CD14-positive monocyte (primary cell): ENCODE measurements at regions of chr5 and their contacts with region 1.

Region 1: GRCh38 chr5:177303121-177303924 is at the starts of genes PRELID1 and RAB24:
- DNase-seq: peak; percentile 84 to 92 (median 92)
- H3K4me3 ChIP-seq: peak within 1 kb of the TSS; percentile 91 to 97 (median 96)
- H3K4me3 Mint-ChIP-seq: peak within 1 kb of the TSS; percentile 93 to 96
- H3K27ac ChIP-seq: peak within 1 kb of the TSS; percentile 79 to 95
- H3K27ac Mint-ChIP-seq: peak within 1 kb of the TSS; percentile 91 to 99 (median 96)
- H3K4me1 ChIP-seq: peaks cover 83 to 94% of the 10 kb centered on the region in 2 donors
- H3K4me1 Mint-ChIP-seq: peaks cover 81% of the 10 kb centered on the region
- H3K27me3 ChIP-seq: no peaks in the 10 kb centered on the region
- H3K27me3 Mint-ChIP-seq: peaks cover 0 to 2% (median 0%) of the 10 kb centered on the region in 3 donors
- CTCF ChIP-seq: peak; percentile 47
- polyA plus RNA-seq, gene PRELID1: 264 to 510 (median 490) TPM
- polyA plus RNA-seq, gene RAB24: 74.3 to 465 (median 94.4) TPM

Region 2: GRCh38 chr5:177133853-177134696 is 169.2 kb before region 1 on chr5:
- intact Hi-C with region 1: loop called in 1 of 2 experiments (anchors 5 kb)
- DNase-seq: peak; percentile 40 to 62 (median 52)
- H3K4me3 ChIP-seq: peak overlapping the region; percentile 57 to 84 (median 66)
- H3K4me3 Mint-ChIP-seq: peak overlapping the region; percentile 82 to 92
- H3K27ac ChIP-seq: peak overlapping the region; percentile 63 to 86
- H3K27ac Mint-ChIP-seq: peak overlapping the region; percentile 75 to 91 (median 89)
- H3K4me1 ChIP-seq: peaks cover 34 to 54% of the 10 kb centered on the region in 2 donors
- H3K4me1 Mint-ChIP-seq: peaks cover 35% of the 10 kb centered on the region
- H3K27me3 ChIP-seq: no peaks in the 10 kb centered on the region
- H3K27me3 Mint-ChIP-seq: no peaks in the 10 kb centered on the region
- CTCF ChIP-seq: no peak

Region 3: DNA sequence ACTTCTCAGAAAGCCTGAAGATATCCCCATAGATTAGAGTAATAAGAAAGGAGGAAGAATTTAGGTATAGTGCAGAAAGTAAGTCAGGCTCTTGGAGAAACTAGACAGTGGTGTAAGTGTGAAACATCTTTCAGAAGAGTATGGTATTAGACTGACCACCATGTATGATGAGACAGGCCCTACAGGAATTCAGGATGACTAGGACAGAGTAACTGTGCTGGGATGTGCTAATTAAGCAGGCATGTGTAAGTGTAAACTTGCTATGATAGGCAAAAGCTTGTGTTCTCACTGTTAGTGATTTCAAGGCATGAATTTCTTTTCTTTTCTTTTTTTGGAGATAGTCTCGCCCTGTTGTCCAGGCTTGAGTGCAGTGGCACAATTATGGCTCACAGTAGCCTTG is 70.6 kb before region 1 on chr5:
- intact Hi-C with region 1: no loop called
- DNase-seq: no peak
- H3K4me3 ChIP-seq: no peak overlapping the region
- H3K4me3 Mint-ChIP-seq: no peak overlapping the region
- H3K27ac ChIP-seq: no peak overlapping the region
- H3K27ac Mint-ChIP-seq: no peak overlapping the region
- H3K4me1 ChIP-seq: no peaks in the 10 kb centered on the region
- H3K4me1 Mint-ChIP-seq: peaks cover 3% of the 10 kb centered on the region
- H3K27me3 ChIP-seq: no peaks in the 10 kb centered on the region
- H3K27me3 Mint-ChIP-seq: no peaks in the 10 kb centered on the region
- CTCF ChIP-seq: no peak

Region 4: GRCh38 chr5:177592010-177592834 is 288.9 kb after region 1 on chr5 and contains the start of gene TMED9:
- intact Hi-C with region 1: loop called in 1 of 2 experiments (anchors 10 kb)
- DNase-seq: peak; percentile 52 to 72 (median 72)
- H3K4me3 ChIP-seq: peak within 1 kb of the TSS; percentile 80 to 90 (median 87)
- H3K4me3 Mint-ChIP-seq: peak within 1 kb of the TSS; percentile 100
- H3K27ac ChIP-seq: peak within 1 kb of the TSS; percentile 48 to 85
- H3K27ac Mint-ChIP-seq: peak within 1 kb of the TSS; percentile 92 to 99 (median 97)
- H3K4me1 ChIP-seq: peaks cover 16 to 25% of the 10 kb centered on the region in 2 donors
- H3K4me1 Mint-ChIP-seq: peaks cover 25% of the 10 kb centered on the region
- H3K27me3 ChIP-seq: peaks cover 3 to 9% of the 10 kb centered on the region in 2 donors
- H3K27me3 Mint-ChIP-seq: peaks cover 10 to 25% (median 13%) of the 10 kb centered on the region in 3 donors
- CTCF ChIP-seq: no peak
- polyA plus RNA-seq, gene TMED9: 98.2 to 150 (median 136) TPM

Region 5: GRCh38 chr5:178153573-178154343 is 850.4 kb after region 1 on chr5 and contains the start of gene NHP2:
- intact Hi-C with region 1: loop called in 1 of 2 experiments (anchors 5 kb)
- DNase-seq: peak; percentile 98 to 99 (median 99)
- H3K4me3 ChIP-seq: peak within 1 kb of the TSS; percentile 40 to 79 (median 64)
- H3K4me3 Mint-ChIP-seq: peak within 1 kb of the TSS; percentile 86 to 92
- H3K27ac ChIP-seq: peak within 1 kb of the TSS; percentile 33 to 77
- H3K27ac Mint-ChIP-seq: peak within 1 kb of the TSS; percentile 65 to 91 (median 89)
- H3K4me1 ChIP-seq: peaks cover 9 to 17% of the 10 kb centered on the region in 2 donors
- H3K4me1 Mint-ChIP-seq: peaks cover 17% of the 10 kb centered on the region
- H3K27me3 ChIP-seq: no peaks in the 10 kb centered on the region
- H3K27me3 Mint-ChIP-seq: no peaks in the 10 kb centered on the region
- CTCF ChIP-seq: no peak
- polyA plus RNA-seq, gene NHP2: 68.9 to 139 (median 108) TPM